Panc1 (cell line): ENCODE measurements at regions of chr2 and their contacts with region 1.

Region 1: GRCh38 chr2:100580367-100581276 is 17.8 kb downstream of the PDCL3 start:
- DNase-seq: no peak
- ATAC-seq: no peak
- H3K4me3 ChIP-seq: no peak overlapping the region
- H3K27ac ChIP-seq: no peak overlapping the region
- H3K4me1 ChIP-seq: no peaks in the 10 kb centered on the region
- H3K27me3 ChIP-seq: no peaks in the 10 kb centered on the region
- CTCF ChIP-seq: no peak

Region 2: DNA sequence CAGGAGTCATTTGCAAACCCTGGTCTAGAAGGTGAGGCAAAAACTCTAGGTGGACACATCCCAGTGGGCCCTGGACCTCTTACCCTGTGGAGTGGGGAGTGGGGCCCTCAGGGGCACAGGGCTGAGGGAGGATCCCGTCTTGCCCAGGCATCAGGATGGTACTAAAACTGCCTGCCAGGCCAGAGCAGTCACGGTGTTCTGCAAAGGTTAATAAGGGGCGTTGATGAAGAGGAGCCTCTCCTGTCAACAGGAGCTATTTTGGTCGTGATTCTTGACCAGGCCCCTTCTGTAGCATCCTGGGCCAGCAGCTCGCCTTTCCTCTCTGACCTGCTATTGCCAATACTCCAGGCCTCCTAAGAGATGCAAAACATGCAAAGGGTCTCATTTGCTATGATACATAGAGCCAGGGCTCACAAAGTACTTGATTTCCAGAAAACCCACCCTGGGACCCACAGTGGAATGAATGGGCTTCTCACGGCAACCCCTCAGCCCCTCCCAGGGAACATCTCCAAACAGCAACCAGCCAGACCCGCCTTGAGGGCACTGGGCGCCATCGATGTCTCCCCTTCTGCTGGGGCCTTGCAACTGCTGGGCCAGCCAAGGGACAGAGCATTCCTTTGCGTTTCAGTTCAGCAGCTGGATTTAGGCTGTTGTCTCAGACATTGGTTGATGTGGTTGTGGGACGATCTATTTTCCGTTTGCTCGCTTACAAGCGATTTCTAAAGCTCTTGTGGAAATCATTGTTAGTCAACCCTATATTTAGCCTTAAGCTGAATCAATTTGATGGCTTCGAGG is 93.3 kb after region 1 on chr2:
- CTCF ChIA-PET with region 1: no interaction called
- POLR2A ChIA-PET with region 1: no interaction called
- in situ Hi-C with region 1: no loop called
- intact Hi-C with region 1: no loop called
- DNase-seq: no peak
- ATAC-seq: no peak
- H3K4me3 ChIP-seq: no peak overlapping the region
- H3K27ac ChIP-seq: no peak overlapping the region
- H3K4me1 ChIP-seq: no peaks in the 10 kb centered on the region
- H3K27me3 ChIP-seq: no peaks in the 10 kb centered on the region
- CTCF ChIP-seq: no peak

Region 3: DNA sequence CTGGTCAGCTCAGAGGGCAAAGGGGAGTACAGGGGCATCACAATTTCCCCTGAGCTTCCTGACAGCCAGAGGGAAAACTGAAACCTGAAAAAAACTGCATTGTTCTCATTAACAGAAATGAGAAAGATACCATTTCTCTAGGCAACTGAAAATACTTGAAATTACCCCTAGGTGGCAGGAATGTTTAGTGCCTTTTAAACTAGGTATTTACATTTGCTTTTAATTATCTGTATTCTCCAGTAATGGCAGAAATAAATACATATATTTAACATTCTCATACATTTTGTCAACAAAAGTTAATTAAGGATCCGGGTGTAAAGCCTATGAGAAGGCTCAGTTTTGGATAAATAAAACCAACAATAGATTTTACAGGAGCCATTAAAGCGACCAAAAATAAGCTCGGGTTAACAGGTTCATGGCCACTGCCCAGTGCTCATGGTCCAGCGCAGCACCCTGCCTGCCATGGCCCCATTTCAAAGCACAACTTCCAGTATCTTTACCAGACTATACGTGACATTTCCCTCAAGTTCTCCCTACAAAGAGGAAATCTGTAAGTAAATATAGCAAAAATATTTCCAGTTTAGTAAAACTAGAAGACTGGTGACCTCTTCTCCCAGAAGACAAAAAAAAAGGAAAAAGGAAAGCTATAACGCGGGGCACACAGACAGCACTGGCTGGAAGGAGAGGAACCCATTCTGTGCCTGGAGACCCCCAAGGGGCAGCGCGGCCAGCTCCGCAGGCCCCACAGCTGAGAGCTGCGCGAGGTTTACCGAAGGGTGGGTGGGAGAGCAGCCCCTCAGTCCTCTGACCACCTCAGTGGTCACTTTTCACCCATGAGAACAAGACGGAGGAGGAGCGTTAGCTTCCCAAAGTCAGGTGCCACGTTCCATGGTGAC is 456.2 kb after region 1 on chr2:
- CTCF ChIA-PET with region 1: interaction called, 11 read pairs
- POLR2A ChIA-PET with region 1: no interaction called
- in situ Hi-C with region 1: no loop called
- intact Hi-C with region 1: no loop called
- DNase-seq: no peak
- ATAC-seq: no peak
- H3K4me3 ChIP-seq: no peak overlapping the region
- H3K27ac ChIP-seq: peak overlapping the region; percentile 66
- H3K4me1 ChIP-seq: peaks cover 4% of the 10 kb centered on the region; the same call in 1 of the 2 replicates
- H3K27me3 ChIP-seq: no peaks in the 10 kb centered on the region
- CTCF ChIP-seq: no peak; the same call in 1 of the 2 replicates